ENCODE measurements at regions of chr13 and their contacts with region 1.

Region 1: DNA sequence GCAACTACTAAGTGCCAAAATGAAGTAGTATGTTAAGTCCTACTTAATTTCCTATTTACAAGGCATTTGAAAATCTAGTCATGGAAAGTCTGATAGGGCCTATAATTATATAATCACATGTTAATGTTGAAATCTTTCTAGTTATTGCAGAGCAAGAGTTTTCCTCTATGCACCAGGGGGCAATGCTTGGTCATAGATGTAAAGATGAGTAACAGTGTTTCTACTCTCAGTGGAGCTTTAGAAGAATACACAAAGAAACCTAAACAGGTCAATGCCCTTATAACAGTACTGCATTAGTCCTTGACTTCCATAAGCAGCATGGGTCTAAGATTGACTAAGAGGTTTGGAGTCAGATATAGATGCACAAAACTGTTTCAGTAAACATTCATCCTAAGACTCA is 218.7 kb downstream of the KCTD12 start:
- DNase-seq: peak in 2 of 4 donors; percentile 52 to 74
- ATAC-seq: peak; percentile 60
- H3K4me3 ChIP-seq: no peak overlapping the region
- H3K27ac ChIP-seq: no peak overlapping the region
- H3K4me1 ChIP-seq: peaks cover 0 to 25% of the 10 kb centered on the region in 2 donors
- H3K27me3 ChIP-seq: no peaks in the 10 kb centered on the region
- CTCF ChIP-seq: no peak

Region 2: DNA sequence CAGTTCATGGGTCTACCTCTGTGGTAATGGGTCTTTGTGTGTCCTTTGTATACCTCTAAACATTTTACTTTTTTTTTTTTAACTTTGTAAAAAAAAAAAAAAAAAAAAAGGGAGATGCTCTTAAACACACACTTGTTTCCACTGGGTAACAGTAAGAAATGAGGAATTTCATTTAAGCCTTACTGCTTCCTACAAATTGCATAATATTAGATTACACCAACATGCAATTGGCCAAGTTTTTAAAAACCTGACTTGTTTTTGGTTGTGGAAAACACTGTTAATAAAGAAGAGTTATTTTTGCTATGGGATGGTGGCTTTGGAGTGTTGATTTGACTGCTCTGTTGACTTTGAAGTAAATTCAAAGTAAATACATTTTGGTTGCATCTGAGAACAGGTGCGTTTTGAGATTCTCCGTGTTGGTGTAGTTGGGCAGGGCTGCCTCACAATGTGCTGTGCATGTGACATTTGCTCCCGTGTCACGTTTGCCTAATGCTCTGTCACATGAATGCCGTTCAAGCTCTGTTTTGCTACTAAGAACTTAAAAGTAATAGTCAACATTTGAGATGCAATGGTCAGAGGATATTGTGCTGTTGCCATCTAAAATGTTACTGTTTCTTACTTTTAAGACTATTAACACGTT is 829.1 kb before region 1 on chr13:
- intact Hi-C with region 1: no loop called
- DNase-seq: no peak
- ATAC-seq: peak; percentile 14
- H3K4me3 ChIP-seq: no peak overlapping the region
- H3K27ac ChIP-seq: no peak overlapping the region
- H3K4me1 ChIP-seq: no peaks in the 10 kb centered on the region
- H3K27me3 ChIP-seq: no peaks in the 10 kb centered on the region
- CTCF ChIP-seq: no peak

Region 3: DNA sequence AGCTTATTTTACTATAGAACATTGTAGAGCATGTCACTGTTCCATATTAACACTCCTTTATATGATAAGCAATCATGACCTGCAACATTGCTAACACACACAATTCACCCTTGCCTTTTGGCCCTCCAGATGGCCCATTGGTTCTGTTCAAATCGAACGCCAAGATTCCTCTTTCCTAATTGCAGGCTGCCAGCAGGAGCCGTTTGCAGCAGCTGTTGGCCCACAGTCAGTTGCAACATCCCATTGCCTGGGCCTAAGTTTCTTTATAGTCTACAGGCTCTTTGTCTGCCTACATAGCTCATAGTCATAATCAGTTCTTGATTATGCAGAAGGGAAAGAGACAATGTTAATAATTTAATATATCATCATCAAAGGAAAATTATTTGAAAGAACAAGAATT is 181.0 kb after region 1 on chr13:
- intact Hi-C with region 1: no loop called
- DNase-seq: peak in 2 of 4 donors; percentile 46 to 62
- ATAC-seq: peak; percentile 38
- H3K4me3 ChIP-seq: no peak overlapping the region
- H3K27ac ChIP-seq: no peak overlapping the region
- H3K4me1 ChIP-seq: no peaks in the 10 kb centered on the region
- H3K27me3 ChIP-seq: no peaks in the 10 kb centered on the region
- CTCF ChIP-seq: no peak

Region 4: DNA sequence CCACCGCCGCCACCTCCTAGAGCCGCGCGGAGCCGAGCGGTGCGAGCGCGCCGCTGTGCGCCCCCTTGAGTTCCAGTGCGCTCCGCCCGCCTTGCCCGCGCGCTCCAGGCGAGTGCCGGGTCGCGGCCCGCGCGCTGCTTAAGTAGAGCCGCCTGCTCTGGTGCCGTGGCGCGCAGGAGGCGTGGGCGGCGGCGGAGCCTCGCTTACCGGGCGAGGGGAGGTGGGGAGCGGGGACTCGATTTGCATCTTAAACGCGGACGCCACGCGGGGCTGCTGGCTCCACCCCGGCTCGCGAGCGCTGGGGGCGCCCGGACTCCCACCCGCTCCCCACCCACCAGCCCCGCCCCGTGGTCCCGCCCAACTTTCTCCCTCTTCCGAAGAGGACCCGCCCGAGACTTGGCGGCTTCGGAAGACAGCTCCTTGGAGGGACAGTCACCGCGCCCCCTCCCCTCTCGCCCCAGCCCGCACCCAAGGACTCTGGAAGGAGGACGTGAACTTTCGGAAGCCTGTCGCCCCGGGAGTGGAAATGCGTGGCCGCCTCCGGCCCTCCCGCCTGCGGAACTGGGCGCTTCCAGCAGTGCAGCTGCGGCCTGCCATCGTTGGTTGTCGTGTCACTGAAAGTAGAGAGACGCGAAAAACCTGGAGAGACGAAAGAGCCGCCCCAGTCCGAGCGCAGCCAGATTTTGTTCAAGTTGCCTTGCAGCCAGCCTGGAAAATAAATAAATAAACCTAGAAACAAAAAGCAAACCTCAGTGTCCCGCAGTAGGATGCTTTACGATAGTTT is 218.9 kb after region 1 on chr13 and contains the start of gene KCTD12:
- intact Hi-C with region 1: loop called in 1 of 2 experiments (anchors 5 kb)
- DNase-seq: peak; percentile 92 to 98 (median 95)
- ATAC-seq: peak; percentile 80
- H3K4me3 ChIP-seq: peak within 1 kb of the TSS; percentile 80 to 83
- H3K27ac ChIP-seq: peak within 1 kb of the TSS; percentile 95 to 98
- H3K4me1 ChIP-seq: peaks cover 0 to 24% of the 10 kb centered on the region in 2 donors
- H3K27me3 ChIP-seq: no peaks in the 10 kb centered on the region
- CTCF ChIP-seq: no peak
- polyA plus RNA-seq, gene KCTD12: 154 to 234 (median 185) TPM